CD4-positive, alpha-beta T cell (primary cell): ENCODE measurements at regions of chr6 and their contacts with region 1.

Region 1: GRCh38 chr6:43427406-43428111 is at the start of gene ABCC10:
- DNase-seq: peak; percentile 89 to 98 (median 94)
- ATAC-seq: peak; percentile 90
- H3K4me3 ChIP-seq: peak within 1 kb of the TSS; percentile 80
- H3K4me3 Mint-ChIP-seq: peak within 1 kb of the TSS; percentile 95
- H3K27ac ChIP-seq: peak within 1 kb of the TSS; percentile 73 to 76
- H3K27ac Mint-ChIP-seq: peak within 1 kb of the TSS; percentile 93
- H3K4me1 ChIP-seq: peaks cover 29% of the 10 kb centered on the region
- H3K4me1 Mint-ChIP-seq: peaks cover 26% of the 10 kb centered on the region
- H3K27me3 ChIP-seq: no peaks in the 10 kb centered on the region
- H3K27me3 Mint-ChIP-seq: no peaks in the 10 kb centered on the region
- CTCF ChIP-seq: peak; percentile 46
- total RNA-seq, gene ABCC10: 35.7 to 38.5 TPM

Region 2: GRCh38 chr6:42978839-42979522 is 448.6 kb before region 1 on chr6 and contains the start of gene PEX6:
- CTCF ChIA-PET with region 1: no interaction called
- POLR2A ChIA-PET with region 1: interaction called, 3 read pairs
- intact Hi-C with region 1: loop called in 1 of 2 experiments (anchors 2 kb)
- DNase-seq: peak; percentile 81 to 98 (median 93)
- ATAC-seq: peak; percentile 94
- H3K4me3 ChIP-seq: peak within 1 kb of the TSS; percentile 85
- H3K4me3 Mint-ChIP-seq: peak within 1 kb of the TSS; percentile 95
- H3K27ac ChIP-seq: peak within 1 kb of the TSS; percentile 83 to 85
- H3K27ac Mint-ChIP-seq: peak within 1 kb of the TSS; percentile 97
- H3K4me1 ChIP-seq: peaks cover 50% of the 10 kb centered on the region
- H3K4me1 Mint-ChIP-seq: peaks cover 47% of the 10 kb centered on the region
- H3K27me3 ChIP-seq: no peaks in the 10 kb centered on the region
- H3K27me3 Mint-ChIP-seq: no peaks in the 10 kb centered on the region
- CTCF ChIP-seq: no peak
- total RNA-seq, gene PEX6: 12.8 to 13.6 TPM

Region 3: DNA sequence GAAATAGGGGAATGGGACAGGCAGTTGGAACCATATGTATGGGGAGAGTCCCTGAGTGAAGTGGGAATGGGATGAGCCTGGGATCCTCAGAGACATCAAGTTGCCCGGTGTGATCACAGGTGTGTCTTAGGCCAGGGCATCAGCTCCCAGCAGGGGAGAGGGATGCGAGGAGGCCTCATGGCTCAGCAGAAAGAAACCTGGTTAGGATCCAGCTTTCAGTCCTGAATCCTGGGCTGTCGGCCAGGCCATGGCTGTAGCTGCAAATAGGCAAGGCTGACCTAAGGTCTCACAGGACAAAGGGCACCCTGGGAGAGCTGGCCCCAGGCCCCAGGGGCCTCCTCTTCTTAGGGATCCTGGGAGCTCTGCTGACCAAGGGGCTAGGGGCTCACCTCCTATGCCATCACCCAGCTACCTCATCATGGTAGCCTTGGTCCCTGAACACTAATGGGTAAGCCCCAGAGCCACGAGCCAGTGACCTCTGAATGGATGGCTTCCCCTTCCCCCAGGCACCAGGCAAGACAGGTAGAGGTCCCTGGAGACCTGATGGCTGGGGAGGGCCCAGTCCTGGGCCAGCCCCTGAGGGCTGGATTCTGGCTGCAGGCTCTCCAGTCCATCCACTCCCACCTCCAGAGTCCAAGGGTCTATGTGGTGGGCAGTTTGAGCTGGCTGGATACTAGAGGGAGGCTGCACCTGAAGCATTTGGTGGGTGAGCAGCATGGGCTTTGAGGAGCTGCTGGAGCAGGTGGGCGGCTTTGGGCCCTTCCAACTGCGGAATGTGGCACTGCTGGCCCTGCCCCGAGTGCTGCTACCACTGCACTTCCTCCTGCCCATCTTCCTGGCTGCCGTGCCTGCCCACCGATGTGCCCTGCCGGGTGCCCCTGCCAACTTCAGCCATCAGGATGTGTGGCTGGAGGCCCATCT is 129.7 kb before region 1 on chr6 and contains the start of gene SLC22A7:
- CTCF ChIA-PET with region 1: no interaction called
- POLR2A ChIA-PET with region 1: no interaction called
- intact Hi-C with region 1: no loop called
- DNase-seq: no peak
- ATAC-seq: no peak
- H3K4me3 ChIP-seq: no peak within 1 kb of the TSS
- H3K4me3 Mint-ChIP-seq: no peak within 1 kb of the TSS
- H3K27ac ChIP-seq: no peak within 1 kb of the TSS
- H3K27ac Mint-ChIP-seq: no peak within 1 kb of the TSS
- H3K4me1 ChIP-seq: no peaks in the 10 kb centered on the region
- H3K4me1 Mint-ChIP-seq: no peaks in the 10 kb centered on the region
- H3K27me3 ChIP-seq: peaks cover 0 to 5% of the 10 kb centered on the region in 2 experiments
- H3K27me3 Mint-ChIP-seq: peaks cover 13% of the 10 kb centered on the region
- CTCF ChIP-seq: no peak
- total RNA-seq, gene SLC22A7: not detected

Region 4: GRCh38 chr6:43386492-43386891 is 41.1 kb before region 1 on chr6:
- CTCF ChIA-PET with region 1: interaction called, 7 read pairs
- POLR2A ChIA-PET with region 1: interaction called, 17 read pairs
- intact Hi-C with region 1: loop called in 1 of 2 experiments (anchors 1 kb)
- DNase-seq: peak in 3 of 14 experiments; percentile 44 to 57 (median 50)
- ATAC-seq: no peak
- H3K4me3 ChIP-seq: no peak overlapping the region
- H3K4me3 Mint-ChIP-seq: peak overlapping the region; percentile 22
- H3K27ac ChIP-seq: no peak overlapping the region
- H3K27ac Mint-ChIP-seq: peak overlapping the region; percentile 93
- H3K4me1 ChIP-seq: peaks cover 55% of the 10 kb centered on the region
- H3K4me1 Mint-ChIP-seq: peaks cover 75% of the 10 kb centered on the region
- H3K27me3 ChIP-seq: no peaks in the 10 kb centered on the region
- H3K27me3 Mint-ChIP-seq: no peaks in the 10 kb centered on the region
- CTCF ChIP-seq: peak; percentile 54

Region 5: DNA sequence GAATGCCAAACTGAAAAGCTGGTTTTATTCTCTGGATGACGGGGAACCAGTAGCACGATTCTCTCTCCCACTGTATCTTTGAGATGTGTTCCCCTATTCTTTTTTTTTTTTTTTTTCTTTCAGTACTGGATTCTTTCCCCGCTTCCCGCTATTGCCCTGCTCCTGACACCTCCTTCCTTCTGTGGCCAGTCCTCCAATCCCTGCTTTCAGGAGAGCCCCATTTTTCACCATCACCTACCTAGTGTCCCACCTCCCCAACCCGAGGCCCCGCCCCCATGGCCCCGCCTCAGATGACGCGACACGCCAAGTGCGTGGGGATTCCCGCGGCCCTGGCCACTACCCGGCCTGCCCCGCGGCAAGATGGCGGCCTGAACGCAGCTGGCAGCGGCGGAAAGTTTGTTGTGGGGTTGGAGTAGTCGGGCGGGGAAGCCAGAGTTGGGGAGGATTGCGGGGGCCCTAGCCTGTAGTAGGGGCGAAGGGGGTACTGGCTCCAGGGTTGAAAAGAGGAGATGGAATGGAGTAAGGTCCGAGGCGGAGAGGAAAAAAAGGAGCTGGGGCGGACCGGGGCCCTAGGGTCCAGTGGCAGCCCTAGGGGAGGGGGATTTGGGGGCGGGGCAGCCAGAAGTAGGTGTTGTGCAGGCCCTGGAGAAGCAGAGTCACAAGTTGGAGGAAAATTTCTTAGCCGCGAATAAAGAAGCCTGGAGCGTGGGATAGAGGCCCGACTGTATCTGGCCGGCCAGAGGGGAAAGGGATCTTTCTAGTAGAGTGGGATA is 49.9 kb after region 1 on chr6 and contains the start of gene TJAP1:
- CTCF ChIA-PET with region 1: interaction called, 4 read pairs
- POLR2A ChIA-PET with region 1: interaction called, 15 read pairs
- intact Hi-C with region 1: loop called in 1 of 2 experiments (anchors 2 kb)
- DNase-seq: peak; percentile 91 to 99 (median 96)
- ATAC-seq: peak; percentile 100
- H3K4me3 ChIP-seq: peak within 1 kb of the TSS; percentile 81
- H3K4me3 Mint-ChIP-seq: peak within 1 kb of the TSS; percentile 94
- H3K27ac ChIP-seq: peak within 1 kb of the TSS; percentile 81 to 91
- H3K27ac Mint-ChIP-seq: peak within 1 kb of the TSS; percentile 96
- H3K4me1 ChIP-seq: peaks cover 32% of the 10 kb centered on the region
- H3K4me1 Mint-ChIP-seq: peaks cover 46% of the 10 kb centered on the region
- H3K27me3 ChIP-seq: no peaks in the 10 kb centered on the region
- H3K27me3 Mint-ChIP-seq: no peaks in the 10 kb centered on the region
- CTCF ChIP-seq: no peak
- total RNA-seq, gene TJAP1: 23.6 to 24.4 TPM

Region 6: DNA sequence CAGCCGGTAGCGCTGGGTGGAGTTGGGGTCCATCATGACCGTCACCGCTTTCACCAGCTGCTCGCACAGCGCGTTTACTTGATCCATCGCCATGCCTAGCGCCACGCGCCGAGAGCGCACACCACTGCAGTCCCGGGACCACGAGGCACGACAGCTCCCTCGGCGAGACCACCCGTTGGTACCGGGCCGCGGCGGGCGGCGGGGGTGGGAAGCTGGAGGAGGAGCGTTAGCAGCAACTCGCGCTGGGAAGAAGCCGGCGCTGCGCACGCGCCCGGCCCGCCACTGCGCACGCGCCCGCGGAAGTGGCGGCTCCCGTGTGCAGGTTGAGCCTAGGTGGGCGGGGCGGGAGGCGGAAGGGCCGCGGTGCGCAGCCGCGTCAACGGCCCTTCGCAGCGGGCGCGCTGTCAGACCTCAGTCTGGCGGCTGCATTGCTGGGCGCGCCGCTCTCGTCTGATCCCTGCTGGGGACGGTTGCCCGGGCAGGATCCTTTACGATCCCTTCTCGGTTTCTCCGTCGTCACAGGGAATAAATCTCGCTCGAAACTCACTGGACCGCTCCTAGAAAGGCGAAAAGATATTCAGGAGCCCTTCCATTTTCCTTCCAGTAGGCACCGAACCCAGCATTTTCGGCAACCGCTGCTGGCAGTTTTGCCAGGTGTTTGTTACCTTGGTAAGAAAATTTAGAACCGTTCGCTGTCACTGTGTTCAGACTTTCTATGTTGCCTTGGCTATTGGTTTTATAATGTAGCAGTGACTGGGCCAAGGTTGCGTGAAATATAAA is 148.4 kb after region 1 on chr6 and contains the starts of genes POLH and XPO5:
- CTCF ChIA-PET with region 1: no interaction called
- POLR2A ChIA-PET with region 1: no interaction called
- intact Hi-C with region 1: loop called in 1 of 2 experiments (anchors 5 kb)
- DNase-seq: peak; percentile 75 to 97 (median 89)
- ATAC-seq: peak; percentile 95
- H3K4me3 ChIP-seq: peak within 1 kb of the TSS; percentile 100
- H3K4me3 Mint-ChIP-seq: peak within 1 kb of the TSS; percentile 92
- H3K27ac ChIP-seq: peak within 1 kb of the TSS; percentile 58 to 75
- H3K27ac Mint-ChIP-seq: peak within 1 kb of the TSS; percentile 90
- H3K4me1 ChIP-seq: peaks cover 25% of the 10 kb centered on the region
- H3K4me1 Mint-ChIP-seq: peaks cover 31% of the 10 kb centered on the region
- H3K27me3 ChIP-seq: no peaks in the 10 kb centered on the region
- H3K27me3 Mint-ChIP-seq: no peaks in the 10 kb centered on the region
- CTCF ChIP-seq: no peak
- total RNA-seq, gene POLH: 4.2 to 4.4 TPM
- total RNA-seq, gene XPO5: 26.8 to 31.2 TPM